H1 (cell line): ENCODE measurements at regions of chr19 and their contacts with region 1.

Region 1: DNA sequence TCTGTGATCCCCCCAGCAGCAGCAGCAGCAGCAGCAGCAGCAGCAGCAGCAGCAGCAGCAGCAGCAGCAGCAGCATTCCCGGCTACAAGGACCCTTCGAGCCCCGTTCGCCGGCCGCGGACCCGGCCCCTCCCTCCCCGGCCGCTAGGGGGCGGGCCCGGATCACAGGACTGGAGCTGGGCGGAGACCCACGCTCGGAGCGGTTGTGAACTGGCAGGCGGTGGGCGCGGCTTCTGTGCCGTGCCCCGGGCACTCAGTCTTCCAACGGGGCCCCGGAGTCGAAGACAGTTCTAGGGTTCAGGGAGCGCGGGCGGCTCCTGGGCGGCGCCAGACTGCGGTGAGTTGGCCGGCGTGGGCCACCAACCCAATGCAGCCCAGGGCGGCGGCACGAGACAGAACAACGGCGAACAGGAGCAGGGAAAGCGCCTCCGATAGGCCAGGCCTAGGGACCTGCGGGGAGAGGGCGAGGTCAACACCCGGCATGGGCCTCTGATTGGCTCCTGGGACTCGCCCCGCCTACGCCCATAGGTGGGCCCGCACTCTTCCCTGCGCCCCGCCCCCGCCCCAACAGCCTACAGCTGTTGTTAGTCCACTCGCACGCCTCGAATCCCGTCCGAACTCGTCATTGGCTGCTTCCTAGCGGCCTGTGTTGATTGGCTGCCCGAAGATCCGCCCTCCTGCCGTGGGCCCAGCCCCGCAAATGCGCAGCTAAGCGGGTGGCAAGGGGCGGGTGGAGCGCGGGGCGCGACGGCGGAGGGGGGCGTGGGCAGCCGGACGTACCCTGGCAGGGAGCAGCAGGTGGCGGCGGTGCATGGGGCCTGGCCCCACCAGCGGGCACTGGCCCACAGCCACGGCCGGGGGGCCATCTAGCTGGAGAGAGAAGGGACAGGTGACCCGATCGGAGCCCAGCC is 1.4 kb upstream of the SIX5 start:
- DNase-seq: peak; percentile 95 to 96
- H3K4me3 ChIP-seq: peak overlapping the region; percentile 44 to 83 (median 78)
- H3K27ac ChIP-seq: peak overlapping the region; percentile 78; the same call in 1 of the 2 replicates
- H3K4me1 ChIP-seq: peaks cover 0 to 21% (median 17%) of the 10 kb centered on the region in 4 experiments; a peak in 6 of 7 replicates
- H3K27me3 ChIP-seq: no peaks in the 10 kb centered on the region
- CTCF ChIP-seq: peak; percentile 65 to 82 (median 78)
- EP300 ChIP-seq: no peak; a peak in 1 of 3 replicates
- POLR2A ChIP-seq: peak; percentile 75 to 85
- RAD21 ChIP-seq: peak; percentile 56 to 81

Region 2: DNA sequence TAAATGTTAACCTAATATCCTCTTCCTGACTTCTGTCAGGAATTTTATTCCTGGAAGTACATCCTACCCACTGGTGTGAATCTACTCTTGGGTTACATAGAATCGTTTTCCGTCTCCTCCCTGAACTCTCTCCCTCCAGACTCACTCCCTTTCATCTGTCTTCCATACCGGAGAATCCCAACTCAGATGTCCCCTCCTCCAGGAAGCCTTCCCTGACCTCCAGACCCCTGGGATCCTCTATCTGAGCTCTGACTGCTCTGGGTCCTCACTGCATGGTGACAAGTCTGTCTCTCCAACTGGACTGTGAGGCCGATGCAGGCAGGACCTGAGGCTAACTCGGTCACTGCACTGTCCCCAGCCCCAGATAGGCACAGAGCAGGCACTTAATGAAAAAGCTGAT is 210.4 kb before region 1 on chr19:
- CTCF ChIA-PET with region 1: no interaction called
- POLR2A ChIA-PET with region 1: no interaction called
- DNase-seq: no peak
- H3K4me3 ChIP-seq: no peak overlapping the region
- H3K27ac ChIP-seq: no peak overlapping the region
- H3K4me1 ChIP-seq: peaks cover 4 to 5% (median 4%) of the 10 kb centered on the region in 4 experiments
- H3K27me3 ChIP-seq: no peaks in the 10 kb centered on the region
- CTCF ChIP-seq: no peak
- EP300 ChIP-seq: no peak
- POLR2A ChIP-seq: no peak
- RAD21 ChIP-seq: no peak

Region 3: DNA sequence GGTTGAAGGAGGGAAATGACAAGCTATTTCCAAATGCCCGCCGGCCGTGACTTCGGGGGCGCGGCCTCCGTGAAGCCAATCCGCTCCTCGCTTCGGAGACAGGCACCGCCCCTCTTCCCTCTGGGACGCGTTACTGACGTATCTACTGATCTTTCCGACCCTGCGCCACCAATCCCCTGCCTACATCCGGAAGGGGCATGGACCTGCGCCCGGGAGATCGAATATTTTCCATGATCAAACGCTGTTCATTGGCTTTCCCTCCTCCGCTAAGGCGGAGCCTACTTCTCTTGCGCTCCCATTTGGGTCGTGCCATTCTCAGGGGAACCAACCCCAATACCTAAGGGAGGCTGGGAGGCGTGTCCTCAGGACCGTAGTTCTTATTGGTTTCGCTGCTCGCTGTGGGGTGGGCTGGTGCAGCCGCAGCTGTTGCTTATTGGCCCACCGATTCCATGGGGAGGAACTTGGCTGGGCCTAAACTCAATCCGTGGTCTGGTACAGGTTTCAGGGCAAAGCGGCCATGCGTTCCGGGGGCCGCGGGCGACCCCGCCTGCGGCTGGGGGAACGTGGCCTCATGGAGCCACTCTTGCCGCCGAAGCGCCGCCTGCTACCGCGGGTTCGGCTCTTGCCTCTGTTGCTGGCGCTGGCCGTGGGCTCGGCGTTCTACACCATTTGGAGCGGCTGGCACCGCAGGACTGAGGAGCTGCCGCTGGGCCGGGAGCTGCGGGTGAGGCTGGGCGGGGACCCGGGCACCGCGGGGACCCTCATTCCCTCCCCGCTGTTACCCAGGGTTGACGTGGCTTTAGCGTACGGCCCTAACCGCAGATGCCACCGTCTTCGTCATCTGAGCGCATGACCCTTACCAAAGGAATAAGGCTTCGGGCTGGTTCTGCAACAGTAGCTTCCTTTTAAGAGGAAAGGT is 78.0 kb before region 1 on chr19 and contains the start of gene QPCTL:
- CTCF ChIA-PET with region 1: interaction called, 3 read pairs
- POLR2A ChIA-PET with region 1: interaction called, 38 read pairs
- DNase-seq: peak; percentile 91 to 99
- H3K4me3 ChIP-seq: peak within 1 kb of the TSS; percentile 73 to 89 (median 84)
- H3K27ac ChIP-seq: peak within 1 kb of the TSS; percentile 79
- H3K4me1 ChIP-seq: no peaks in the 10 kb centered on the region; a peak in 1 of 7 replicates
- H3K27me3 ChIP-seq: no peaks in the 10 kb centered on the region
- CTCF ChIP-seq: no peak
- EP300 ChIP-seq: no peak
- POLR2A ChIP-seq: peak; percentile 71 to 80; a peak in 2 of 3 replicates
- RAD21 ChIP-seq: no peak
- total RNA-seq, gene QPCTL: 25.2 and 27.1 TPM in 2 replicates

Region 4: GRCh38 chr19:45730389-45731288 is 39.8 kb before region 1 on chr19 and contains the start of gene FBXO46:
- CTCF ChIA-PET with region 1: interaction called, 4 read pairs
- POLR2A ChIA-PET with region 1: interaction called, 284 read pairs
- DNase-seq: peak; percentile 91 to 93
- H3K4me3 ChIP-seq: peak within 1 kb of the TSS; percentile 85 to 99 (median 90)
- H3K27ac ChIP-seq: peak within 1 kb of the TSS; percentile 44; the same call in 1 of the 2 replicates
- H3K4me1 ChIP-seq: peaks cover 0 to 4% (median 3%) of the 10 kb centered on the region in 4 experiments; a peak in 5 of 7 replicates
- H3K27me3 ChIP-seq: no peaks in the 10 kb centered on the region; a peak in 1 of 7 replicates
- CTCF ChIP-seq: peak in 1 of 3 experiments; percentile 21; a peak in 1 of 4 replicates
- EP300 ChIP-seq: no peak
- POLR2A ChIP-seq: peak; percentile 63 to 72
- RAD21 ChIP-seq: peak; percentile 4 to 11; a peak in 2 of 4 replicates
- total RNA-seq, gene FBXO46: 38.9 and 42.3 TPM in 2 replicates

Region 5: DNA sequence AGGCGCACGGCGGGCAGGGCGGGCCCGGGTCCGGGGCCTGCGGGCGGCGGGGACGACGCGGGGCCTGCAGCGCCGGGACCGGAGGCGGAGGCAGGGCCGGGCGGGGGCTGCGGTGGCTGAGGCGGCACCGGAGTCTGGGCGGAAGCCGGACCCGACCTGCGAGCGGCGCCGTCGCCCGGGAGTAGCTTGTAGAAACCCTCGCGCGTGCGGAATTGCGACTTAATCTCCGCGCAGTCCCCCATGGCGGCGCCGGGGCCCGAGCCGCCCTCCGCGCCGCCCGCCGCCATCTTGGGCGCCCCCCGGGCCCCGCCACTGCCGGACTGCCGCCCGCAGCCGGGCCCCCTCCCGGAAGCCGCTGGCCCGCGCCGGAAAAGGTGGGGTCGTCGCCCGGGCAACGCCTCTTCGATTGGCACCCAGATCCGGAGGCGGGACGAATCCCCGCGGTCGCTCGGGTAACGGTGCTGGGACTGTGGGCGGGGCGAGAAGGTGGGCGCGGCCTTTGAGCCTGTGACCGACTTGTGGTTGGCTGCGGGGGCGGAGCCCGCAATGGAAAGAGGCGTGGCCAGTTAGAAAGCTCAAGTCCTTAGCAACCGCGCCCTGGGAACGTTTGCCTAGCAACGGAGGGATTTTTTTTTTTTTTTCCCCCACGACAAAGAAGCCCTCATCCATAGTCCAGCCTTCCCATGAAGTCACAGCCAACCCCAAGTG is 22.2 kb after region 1 on chr19 and contains the start of gene DMWD:
- CTCF ChIA-PET with region 1: interaction called, 6 read pairs
- POLR2A ChIA-PET with region 1: interaction called, 27 read pairs
- DNase-seq: peak; percentile 97 to 100
- H3K4me3 ChIP-seq: peak within 1 kb of the TSS; percentile 67 to 100 (median 86)
- H3K27ac ChIP-seq: peak within 1 kb of the TSS; percentile 83; the same call in 1 of the 2 replicates
- H3K4me1 ChIP-seq: peaks cover 0 to 6% (median 4%) of the 10 kb centered on the region in 4 experiments; a peak in 3 of 7 replicates
- H3K27me3 ChIP-seq: no peaks in the 10 kb centered on the region
- CTCF ChIP-seq: no peak
- EP300 ChIP-seq: no peak
- POLR2A ChIP-seq: peak in 1 of 2 experiments; percentile 80; a peak in 1 of 3 replicates
- RAD21 ChIP-seq: no peak
- total RNA-seq, gene DMWD: 41.0 and 41.6 TPM in 2 replicates

Region 6: GRCh38 chr19:45817010-45817724 is 46.7 kb after region 1 on chr19:
- CTCF ChIA-PET with region 1: interaction called, 55 read pairs
- POLR2A ChIA-PET with region 1: interaction called, 175 read pairs
- DNase-seq: peak; percentile 95 to 100
- H3K4me3 ChIP-seq: peak overlapping the region; percentile 42 to 68 (median 52); a peak in 6 of 8 replicates
- H3K27ac ChIP-seq: peak overlapping the region; percentile 86
- H3K4me1 ChIP-seq: peaks cover 0 to 23% (median 20%) of the 10 kb centered on the region in 4 experiments; a peak in 6 of 7 replicates
- H3K27me3 ChIP-seq: no peaks in the 10 kb centered on the region
- CTCF ChIP-seq: peak; percentile 97 to 99 (median 99)
- EP300 ChIP-seq: peak in 1 of 2 experiments; percentile 40; a peak in 1 of 3 replicates
- POLR2A ChIP-seq: peak; percentile 68 to 71; a peak in 2 of 3 replicates
- RAD21 ChIP-seq: peak; percentile 60 to 67